ENCODE measurements at regions of chr10 and their contacts with region 1.

Region 1: GRCh38 chr10:75487755-75488125 is 56.3 kb downstream of the LRMDA start:
- DNase-seq: no peak
- H3K4me3 ChIP-seq: no peak overlapping the region
- H3K27ac ChIP-seq: no peak overlapping the region
- H3K4me1 ChIP-seq: no peaks in the 10 kb centered on the region
- H3K27me3 ChIP-seq: no peaks in the 10 kb centered on the region
- CTCF ChIP-seq: no peak

Region 2: DNA sequence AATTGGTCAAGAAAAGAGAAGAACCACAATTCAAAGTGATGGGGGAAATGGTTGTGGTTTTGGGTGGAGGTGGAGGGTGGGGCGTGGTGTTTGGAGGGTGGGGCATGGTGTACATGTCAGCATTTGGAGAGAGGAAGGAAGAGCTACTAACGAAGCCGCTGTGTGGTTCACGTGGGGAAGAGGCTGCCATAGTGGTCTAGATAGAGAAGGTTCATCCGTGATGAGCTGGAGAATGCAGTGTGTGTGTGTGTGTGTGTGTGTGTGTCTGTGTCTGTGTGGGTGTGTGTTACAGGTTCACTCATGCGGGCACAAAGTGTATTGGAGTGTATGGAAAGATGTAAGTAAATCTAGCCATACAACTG is 1495.9 kb before region 1 on chr10:
- CTCF ChIA-PET with region 1: no interaction called
- POLR2A ChIA-PET with region 1: interaction called, 32 read pairs
- intact Hi-C with region 1: no loop called
- DNase-seq: no peak
- H3K4me3 ChIP-seq: no peak overlapping the region
- H3K27ac ChIP-seq: no peak overlapping the region
- H3K4me1 ChIP-seq: 0 out of 2 replicates have a peak, but pooled peaks cover 5% of the 10 kb centered on the region
- H3K27me3 ChIP-seq: no peaks in the 10 kb centered on the region
- CTCF ChIP-seq: no peak

Region 3: GRCh38 chr10:75475470-75476182 is 12.1 kb before region 1 on chr10:
- CTCF ChIA-PET with region 1: no interaction called
- POLR2A ChIA-PET with region 1: no interaction called
- intact Hi-C with region 1: no loop called
- DNase-seq: no peak
- H3K4me3 ChIP-seq: no peak overlapping the region
- H3K27ac ChIP-seq: no peak overlapping the region
- H3K4me1 ChIP-seq: no peaks in the 10 kb centered on the region
- H3K27me3 ChIP-seq: no peaks in the 10 kb centered on the region
- CTCF ChIP-seq: no peak